CD4-positive, alpha-beta memory T cell (primary cell): ENCODE measurements at regions of chr17 and their contacts with region 1.

Region 1: DNA sequence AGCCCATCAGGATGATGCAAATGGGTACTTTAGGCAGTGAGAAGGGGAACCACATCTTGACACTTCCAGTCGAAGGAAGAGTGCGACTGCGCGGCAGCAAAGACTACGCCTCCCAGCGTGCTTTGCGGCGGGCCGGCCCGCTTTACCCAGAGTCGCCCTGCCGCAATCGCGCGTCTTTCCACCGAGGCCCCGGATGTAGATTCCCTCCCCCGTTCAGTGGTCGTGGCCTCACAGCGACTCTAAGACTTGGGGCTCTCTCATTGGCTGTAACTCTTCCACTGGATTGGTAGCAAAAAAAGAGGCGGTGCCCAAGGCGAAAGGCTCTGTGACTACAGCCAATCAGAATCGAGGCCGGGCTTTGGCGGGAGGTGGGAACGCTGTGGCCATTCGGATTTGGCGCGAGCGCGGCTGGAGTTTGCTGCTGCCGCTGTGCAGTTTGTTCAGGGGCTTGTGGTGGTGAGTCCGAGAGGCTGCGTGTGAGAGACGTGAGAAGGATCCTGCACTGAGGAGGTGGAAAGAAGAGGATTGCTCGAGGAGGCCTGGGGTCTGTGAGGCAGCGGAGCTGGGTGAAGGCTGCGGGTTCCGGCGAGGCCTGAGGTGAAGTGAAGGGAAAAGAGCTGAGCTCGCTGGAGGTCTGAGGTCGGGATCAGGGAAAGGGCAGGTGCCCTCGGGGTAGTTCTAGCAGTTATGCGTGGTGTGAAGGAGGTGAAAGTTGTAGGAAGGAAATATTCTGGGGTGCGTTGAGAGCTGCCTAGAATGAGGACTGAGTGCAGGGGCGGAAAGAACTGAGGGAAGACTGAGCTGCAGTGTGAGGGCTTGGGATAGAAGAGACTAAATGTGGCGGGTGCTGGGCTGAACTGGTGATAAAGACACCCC is at the start of gene CDC6:
- DNase-seq: peak; percentile 97 to 100 (median 98)
- H3K4me3 ChIP-seq: peak within 1 kb of the TSS; percentile 80 to 89
- H3K4me3 Mint-ChIP-seq: peak within 1 kb of the TSS; percentile 97 to 100 (median 99)
- H3K27ac ChIP-seq: peak within 1 kb of the TSS; percentile 42
- H3K27ac Mint-ChIP-seq: peak within 1 kb of the TSS; percentile 82 to 98 (median 94)
- H3K4me1 ChIP-seq: peaks cover 26% of the 10 kb centered on the region
- H3K4me1 Mint-ChIP-seq: peaks cover 17 to 40% (median 27%) of the 10 kb centered on the region in 4 donors
- H3K27me3 ChIP-seq: no peaks in the 10 kb centered on the region
- H3K27me3 Mint-ChIP-seq: no peaks in the 10 kb centered on the region
- total RNA-seq, gene CDC6: 0.72 to 2.1 TPM

Region 2: DNA sequence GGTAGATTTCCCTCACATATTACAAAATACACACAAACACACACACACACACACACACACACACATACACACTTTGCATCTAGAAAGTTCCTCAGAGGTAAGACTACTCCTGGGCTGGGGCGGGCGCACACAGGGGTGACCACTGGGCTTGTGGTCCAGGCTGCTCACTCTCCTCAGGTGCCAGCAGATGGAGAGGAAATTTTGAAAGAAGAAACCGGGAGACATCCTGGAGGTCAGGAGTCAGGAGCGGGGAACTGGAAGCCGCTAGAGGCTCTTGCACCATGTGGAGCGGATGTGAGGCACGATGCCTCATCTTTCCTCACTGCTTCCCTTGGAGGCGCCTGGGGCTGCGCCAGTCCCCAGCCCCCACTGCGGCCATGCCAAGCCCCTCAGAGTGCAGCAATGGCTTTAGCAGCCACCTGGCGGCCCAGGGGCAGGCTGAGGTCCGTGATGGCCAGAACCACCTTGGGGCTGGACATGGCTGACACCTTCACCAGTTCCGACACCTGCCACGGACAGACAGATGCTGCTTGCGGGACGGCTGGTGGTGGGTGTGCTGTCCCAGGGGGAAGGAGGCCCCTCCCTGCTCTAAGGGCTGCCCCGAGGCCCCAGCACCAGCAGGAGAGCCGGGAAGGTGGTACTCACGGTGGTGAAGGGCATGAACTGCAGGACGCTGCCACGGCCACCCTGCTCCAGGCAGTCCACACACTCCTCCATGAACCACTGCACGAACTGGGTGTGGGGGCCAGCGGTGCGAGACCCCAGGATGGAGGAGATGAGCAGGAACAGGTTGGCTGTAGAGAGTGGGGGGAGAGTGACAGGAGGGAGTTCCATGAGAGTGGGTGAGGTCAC is 268.4 kb before region 1 on chr17:
- CTCF ChIA-PET with region 1: interaction called, 12 read pairs
- POLR2A ChIA-PET with region 1: no interaction called
- intact Hi-C with region 1: no loop called
- DNase-seq: no peak
- H3K4me3 ChIP-seq: no peak overlapping the region
- H3K4me3 Mint-ChIP-seq: no peak overlapping the region
- H3K27ac ChIP-seq: no peak overlapping the region
- H3K27ac Mint-ChIP-seq: peak overlapping the region in 2 of 7 donors; percentile 57 to 68
- H3K4me1 ChIP-seq: no peaks in the 10 kb centered on the region
- H3K4me1 Mint-ChIP-seq: no peaks in the 10 kb centered on the region
- H3K27me3 ChIP-seq: no peaks in the 10 kb centered on the region
- H3K27me3 Mint-ChIP-seq: no peaks in the 10 kb centered on the region

Region 3: GRCh38 chr17:40153603-40154236 is 134.0 kb before region 1 on chr17:
- CTCF ChIA-PET with region 1: no interaction called
- POLR2A ChIA-PET with region 1: no interaction called
- intact Hi-C with region 1: no loop called
- DNase-seq: no peak
- H3K4me3 ChIP-seq: no peak overlapping the region
- H3K4me3 Mint-ChIP-seq: no peak overlapping the region
- H3K27ac ChIP-seq: no peak overlapping the region
- H3K27ac Mint-ChIP-seq: peak overlapping the region; percentile 14 to 85 (median 41)
- H3K4me1 ChIP-seq: peaks cover 21% of the 10 kb centered on the region
- H3K4me1 Mint-ChIP-seq: peaks cover 25 to 54% (median 38%) of the 10 kb centered on the region in 4 donors
- H3K27me3 ChIP-seq: no peaks in the 10 kb centered on the region
- H3K27me3 Mint-ChIP-seq: no peaks in the 10 kb centered on the region

Region 4: DNA sequence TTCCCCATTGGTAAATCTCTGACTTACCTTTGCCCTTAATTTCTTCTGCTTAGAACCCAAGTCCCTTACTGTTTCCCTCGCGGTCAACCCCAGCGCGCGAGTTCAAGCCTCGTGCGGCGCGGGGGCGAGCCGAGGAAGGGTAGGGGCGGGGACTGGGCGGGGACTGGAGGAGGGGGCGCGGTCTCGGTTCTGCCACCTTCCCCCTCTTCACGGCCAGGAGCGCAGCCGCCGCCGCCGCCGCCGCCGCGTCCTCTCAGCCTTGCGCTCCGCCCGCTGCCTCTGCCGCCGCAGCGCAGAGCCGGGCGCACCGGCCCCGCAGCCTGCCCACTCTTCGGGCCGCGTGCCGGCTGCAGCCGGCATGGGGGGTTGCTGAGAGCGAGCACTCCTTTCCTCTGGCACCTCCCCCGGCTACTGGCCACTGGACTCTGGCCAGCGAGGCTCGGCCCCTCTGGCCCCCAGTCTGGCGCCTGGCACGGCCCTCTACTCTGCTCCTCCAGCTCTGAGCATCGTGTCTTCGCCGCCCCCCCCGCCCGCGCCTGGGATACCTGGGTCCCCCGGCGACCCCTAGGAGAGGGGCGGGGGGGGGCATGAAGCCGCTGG is 110.4 kb before region 1 on chr17 and contains the start of gene RAPGEFL1:
- CTCF ChIA-PET with region 1: no interaction called
- POLR2A ChIA-PET with region 1: no interaction called
- intact Hi-C with region 1: no loop called
- DNase-seq: peak; percentile 69 to 83 (median 76)
- H3K4me3 ChIP-seq: peak within 1 kb of the TSS in 1 of 2 donors; percentile 32
- H3K4me3 Mint-ChIP-seq: peak within 1 kb of the TSS; percentile 40 to 79 (median 62)
- H3K27ac ChIP-seq: no peak within 1 kb of the TSS
- H3K27ac Mint-ChIP-seq: peak within 1 kb of the TSS; percentile 41 to 90 (median 83)
- H3K4me1 ChIP-seq: peaks cover 7% of the 10 kb centered on the region
- H3K4me1 Mint-ChIP-seq: peaks cover 6 to 17% (median 8%) of the 10 kb centered on the region in 4 donors
- H3K27me3 ChIP-seq: no peaks in the 10 kb centered on the region
- H3K27me3 Mint-ChIP-seq: no peaks in the 10 kb centered on the region
- total RNA-seq, gene RAPGEFL1: 5.4 to 6.5 TPM

Region 5: DNA sequence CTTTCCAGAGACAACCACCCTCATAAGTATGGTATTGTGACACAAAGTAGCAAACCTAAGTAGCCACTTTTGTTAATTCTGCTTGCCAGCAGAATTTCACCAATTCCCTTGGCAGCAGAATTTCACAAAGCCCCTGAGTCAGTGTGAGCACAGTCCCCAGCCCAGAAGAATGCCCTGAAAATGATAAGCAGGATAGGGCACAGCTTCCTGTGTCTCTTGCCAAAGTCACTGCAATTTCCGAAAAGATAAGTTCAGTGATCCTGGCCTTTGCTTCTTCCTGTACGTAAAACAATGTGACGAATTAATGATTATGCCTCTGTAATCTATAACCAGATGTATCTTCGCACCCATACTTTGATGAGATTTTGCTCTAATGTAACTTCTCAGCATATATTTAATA is 84.6 kb before region 1 on chr17:
- CTCF ChIA-PET with region 1: interaction called, 86 read pairs
- POLR2A ChIA-PET with region 1: no interaction called
- intact Hi-C with region 1: loop called (anchors 1 kb)
- DNase-seq: no peak
- H3K4me3 ChIP-seq: no peak overlapping the region
- H3K4me3 Mint-ChIP-seq: no peak overlapping the region
- H3K27ac ChIP-seq: no peak overlapping the region
- H3K27ac Mint-ChIP-seq: peak overlapping the region in 1 of 7 donors; percentile 50
- H3K4me1 ChIP-seq: no peaks in the 10 kb centered on the region
- H3K4me1 Mint-ChIP-seq: peaks cover 0 to 6% (median 2%) of the 10 kb centered on the region in 4 donors
- H3K27me3 ChIP-seq: no peaks in the 10 kb centered on the region
- H3K27me3 Mint-ChIP-seq: peaks cover 1 to 7% of the 10 kb centered on the region in 2 donors

Region 6: GRCh38 chr17:40219073-40219860 is 68.5 kb before region 1 on chr17 and contains the start of gene WIPF2:
- CTCF ChIA-PET with region 1: interaction called, 6 read pairs
- POLR2A ChIA-PET with region 1: interaction called, 4 read pairs
- intact Hi-C with region 1: loop called (anchors 1 kb)
- DNase-seq: peak; percentile 94 to 97 (median 95)
- H3K4me3 ChIP-seq: peak within 1 kb of the TSS; percentile 59 to 71
- H3K4me3 Mint-ChIP-seq: peak within 1 kb of the TSS; percentile 92 to 100 (median 98)
- H3K27ac ChIP-seq: peak within 1 kb of the TSS; percentile 96
- H3K27ac Mint-ChIP-seq: peak within 1 kb of the TSS; percentile 93 to 100 (median 100)
- H3K4me1 ChIP-seq: peaks cover 26% of the 10 kb centered on the region
- H3K4me1 Mint-ChIP-seq: peaks cover 23 to 49% (median 33%) of the 10 kb centered on the region in 4 donors
- H3K27me3 ChIP-seq: no peaks in the 10 kb centered on the region
- H3K27me3 Mint-ChIP-seq: no peaks in the 10 kb centered on the region
- total RNA-seq, gene WIPF2: 34.4 to 34.7 TPM

Region 7: GRCh38 chr17:40373324-40373723 is 85.6 kb after region 1 on chr17:
- CTCF ChIA-PET with region 1: no interaction called
- POLR2A ChIA-PET with region 1: no interaction called
- intact Hi-C with region 1: no loop called
- DNase-seq: no peak
- H3K4me3 ChIP-seq: no peak overlapping the region
- H3K4me3 Mint-ChIP-seq: no peak overlapping the region
- H3K27ac ChIP-seq: no peak overlapping the region
- H3K27ac Mint-ChIP-seq: no peak overlapping the region
- H3K4me1 ChIP-seq: no peaks in the 10 kb centered on the region
- H3K4me1 Mint-ChIP-seq: peaks cover 4 to 14% (median 8%) of the 10 kb centered on the region in 4 donors
- H3K27me3 ChIP-seq: no peaks in the 10 kb centered on the region
- H3K27me3 Mint-ChIP-seq: peaks cover 2 to 5% of the 10 kb centered on the region in 2 donors